Activated CD4-positive, alpha-beta T cell treated with anti-CD3 and anti-CD28 coated beads, Interleukin-2, amount 10 ng/mL, durations not matched to agents 24 days and 14 days (primary cell): ENCODE measurements at regions of chr12 and their contacts with region 1.

Region 1: DNA sequence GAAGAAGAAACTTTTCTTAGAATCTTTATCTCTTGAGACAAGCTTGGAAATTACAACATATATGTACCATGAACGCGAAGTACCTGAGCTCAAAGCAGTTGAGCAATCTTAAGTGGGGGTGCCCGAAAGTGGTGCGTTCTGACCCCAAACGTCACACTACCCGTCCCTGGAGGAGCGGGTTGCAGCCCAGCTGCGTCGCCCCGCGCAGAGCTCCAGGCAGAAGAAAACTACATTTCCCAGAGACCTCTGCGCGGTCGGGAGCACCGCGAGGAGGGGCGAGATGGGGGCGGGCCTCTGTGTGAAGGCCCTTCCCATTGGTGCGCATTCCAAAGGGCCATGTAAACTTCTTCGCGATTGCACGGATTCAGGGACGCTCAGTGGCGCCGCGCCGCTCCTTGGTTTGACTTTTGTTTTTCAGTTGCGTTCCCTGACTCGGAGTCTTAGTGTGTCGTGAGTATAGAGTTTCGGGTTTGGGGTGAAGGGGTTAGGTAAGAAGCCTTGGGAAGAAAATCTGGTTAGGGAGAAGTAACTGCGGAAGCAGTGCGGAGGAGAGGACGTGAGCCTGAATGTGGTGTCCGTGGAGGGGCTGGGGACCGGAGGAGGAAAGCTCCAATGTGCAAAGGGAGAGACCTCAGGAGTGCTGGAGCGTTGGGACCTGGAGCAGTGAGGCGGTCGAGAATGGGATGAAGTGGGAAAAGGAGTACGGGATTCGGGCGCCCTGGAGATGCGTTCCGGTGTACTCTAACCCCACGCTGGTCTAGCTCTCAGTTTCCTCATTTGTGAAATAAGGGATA is at the start of gene CCDC77:
- DNase-seq: peak; percentile 99
- H3K4me3 Mint-ChIP-seq: no peak within 1 kb of the TSS
- H3K27ac Mint-ChIP-seq: no peak within 1 kb of the TSS
- H3K4me1 Mint-ChIP-seq: no peaks in the 10 kb centered on the region
- H3K27me3 Mint-ChIP-seq: no peaks in the 10 kb centered on the region
- total RNA-seq, gene CCDC77: 12.2 and 13.0 TPM in 2 replicates

Region 2: GRCh38 chr12:389139-390096 is 12.0 kb before region 1 on chr12 and contains the start of gene KDM5A:
- intact Hi-C with region 1: loop called (anchors 1 kb)
- DNase-seq: peak; percentile 96
- H3K4me3 Mint-ChIP-seq: peak within 1 kb of the TSS; percentile 94
- H3K27ac Mint-ChIP-seq: peak within 1 kb of the TSS; percentile 98
- H3K4me1 Mint-ChIP-seq: peaks cover 24% of the 10 kb centered on the region
- H3K27me3 Mint-ChIP-seq: no peaks in the 10 kb centered on the region
- total RNA-seq, gene KDM5A: 79.0 and 82.7 TPM in 2 replicates

Region 3: DNA sequence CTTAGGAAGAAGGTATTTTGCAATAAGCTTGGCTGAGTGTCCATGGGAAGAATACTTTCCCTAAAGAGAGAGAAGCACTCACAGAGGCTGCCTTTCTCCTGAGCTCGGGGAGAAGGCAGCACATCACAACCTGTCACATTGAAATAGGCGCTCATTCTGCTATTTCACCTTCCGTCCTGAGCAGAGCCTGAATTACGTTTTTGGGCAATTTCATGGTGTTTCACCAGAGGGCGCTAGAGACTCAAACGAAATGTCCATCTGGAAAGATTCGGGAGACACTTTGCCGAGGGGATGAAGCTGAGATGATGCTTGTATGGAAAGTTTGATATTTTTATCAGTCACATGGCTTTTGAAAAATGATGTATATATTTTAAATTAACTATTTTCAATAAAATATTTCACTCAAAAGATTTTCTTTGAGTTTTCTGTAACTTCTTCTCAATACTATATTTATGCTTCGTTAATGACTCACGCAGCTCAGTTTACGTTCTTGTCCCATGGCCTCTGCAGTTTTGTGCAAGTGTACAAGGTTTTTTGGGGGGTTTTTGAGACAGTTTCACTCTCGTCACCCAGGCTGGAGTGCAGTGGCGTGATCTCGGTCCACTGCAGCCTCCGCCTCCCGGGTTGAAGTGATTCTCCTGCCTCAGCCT is 40.9 kb after region 1 on chr12:
- intact Hi-C with region 1: no loop called
- DNase-seq: peak; percentile 85
- H3K4me3 Mint-ChIP-seq: no peak overlapping the region
- H3K27ac Mint-ChIP-seq: no peak overlapping the region
- H3K4me1 Mint-ChIP-seq: no peaks in the 10 kb centered on the region
- H3K27me3 Mint-ChIP-seq: no peaks in the 10 kb centered on the region

Region 4: GRCh38 chr12:990661-991349 is 589.4 kb after region 1 on chr12 and contains the start of gene ERC1:
- intact Hi-C with region 1: loop called (anchors 1 kb)
- DNase-seq: peak; percentile 96
- H3K4me3 Mint-ChIP-seq: peak within 1 kb of the TSS; percentile 100
- H3K27ac Mint-ChIP-seq: peak within 1 kb of the TSS; percentile 99
- H3K4me1 Mint-ChIP-seq: peaks cover 36% of the 10 kb centered on the region
- H3K27me3 Mint-ChIP-seq: peaks cover 2% of the 10 kb centered on the region
- total RNA-seq, gene ERC1: 30.8 and 31.6 TPM in 2 replicates